CD8-positive, alpha-beta memory T cell (primary cell): ENCODE measurements at regions of chr6 and their contacts with region 1.

Region 1: GRCh38 chr6:152338335-152339125 is 298.6 kb downstream of the SYNE1 start:
- DNase-seq: peak; percentile 27 to 71 (median 38)
- H3K4me3 ChIP-seq: no peak overlapping the region
- H3K4me3 Mint-ChIP-seq: no peak overlapping the region
- H3K27ac ChIP-seq: no peak overlapping the region
- H3K27ac Mint-ChIP-seq: peak overlapping the region in 1 of 8 donors; percentile 82
- H3K4me1 ChIP-seq: no peaks in the 10 kb centered on the region
- H3K4me1 Mint-ChIP-seq: peaks cover 0 to 4% (median 3%) of the 10 kb centered on the region in 3 donors
- H3K27me3 ChIP-seq: no peaks in the 10 kb centered on the region
- H3K27me3 Mint-ChIP-seq: peaks cover 0 to 1% of the 10 kb centered on the region in 2 donors

Region 2: GRCh38 chr6:152301764-152302568 is 36.6 kb before region 1 on chr6:
- CTCF ChIA-PET with region 1: interaction called, 80 read pairs
- POLR2A ChIA-PET with region 1: no interaction called
- DNase-seq: peak; percentile 81 to 91 (median 88)
- H3K4me3 ChIP-seq: peak overlapping the region; percentile 97
- H3K4me3 Mint-ChIP-seq: peak overlapping the region; percentile 95 to 100 (median 100)
- H3K27ac ChIP-seq: peak overlapping the region; percentile 85
- H3K27ac Mint-ChIP-seq: peak overlapping the region; percentile 93 to 100 (median 98)
- H3K4me1 ChIP-seq: peaks cover 31% of the 10 kb centered on the region
- H3K4me1 Mint-ChIP-seq: peaks cover 30 to 49% (median 42%) of the 10 kb centered on the region in 3 donors
- H3K27me3 ChIP-seq: no peaks in the 10 kb centered on the region
- H3K27me3 Mint-ChIP-seq: no peaks in the 10 kb centered on the region

Region 3: DNA sequence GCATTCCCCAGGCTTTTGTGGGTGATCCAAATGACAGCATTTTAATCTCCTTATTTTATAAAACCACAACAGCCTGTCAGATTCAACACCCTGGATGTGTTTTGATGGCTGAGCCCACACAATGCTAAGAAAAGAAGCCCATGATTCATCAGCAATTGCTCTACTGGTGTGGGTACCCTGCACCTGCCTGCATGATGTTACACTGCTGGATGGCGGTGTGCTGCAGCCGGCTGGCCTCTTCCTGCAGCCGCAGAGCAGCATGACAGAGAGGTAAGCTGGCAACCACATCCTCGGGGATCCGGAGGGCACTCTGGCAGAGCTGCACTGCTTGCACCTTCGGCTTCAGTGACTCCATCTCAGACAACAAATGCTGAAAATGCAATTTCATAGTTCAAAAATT is 28.9 kb before region 1 on chr6:
- CTCF ChIA-PET with region 1: interaction called, 10 read pairs
- POLR2A ChIA-PET with region 1: no interaction called
- DNase-seq: peak; percentile 30 to 83 (median 59)
- H3K4me3 ChIP-seq: no peak overlapping the region
- H3K4me3 Mint-ChIP-seq: peak overlapping the region in 2 of 7 donors; percentile 23 to 25
- H3K27ac ChIP-seq: no peak overlapping the region
- H3K27ac Mint-ChIP-seq: peak overlapping the region in 2 of 8 donors; percentile 12 to 46
- H3K4me1 ChIP-seq: peaks cover 11% of the 10 kb centered on the region
- H3K4me1 Mint-ChIP-seq: peaks cover 17 to 20% (median 20%) of the 10 kb centered on the region in 3 donors
- H3K27me3 ChIP-seq: no peaks in the 10 kb centered on the region
- H3K27me3 Mint-ChIP-seq: no peaks in the 10 kb centered on the region

Region 4: DNA sequence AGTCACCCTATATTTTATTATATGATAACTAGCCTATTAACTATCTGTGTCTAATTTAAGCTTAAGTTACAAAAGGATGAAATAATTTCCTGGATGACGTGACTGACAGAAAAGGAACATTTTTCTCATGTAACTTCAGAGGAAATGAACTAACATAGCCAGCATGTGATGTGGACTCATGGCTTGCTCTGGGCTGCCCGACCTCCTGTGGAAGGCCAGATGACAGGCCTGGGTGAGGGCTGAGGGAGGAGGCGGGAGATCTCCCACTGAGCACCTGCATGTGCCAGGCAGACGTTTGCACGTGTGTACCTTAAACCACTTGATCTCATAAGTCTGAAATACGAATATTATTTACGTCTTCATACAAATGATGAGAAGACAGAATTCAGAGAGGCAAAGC is 22.5 kb before region 1 on chr6:
- CTCF ChIA-PET with region 1: interaction called, 18 read pairs
- POLR2A ChIA-PET with region 1: no interaction called
- DNase-seq: no peak
- H3K4me3 ChIP-seq: no peak overlapping the region
- H3K4me3 Mint-ChIP-seq: no peak overlapping the region
- H3K27ac ChIP-seq: no peak overlapping the region
- H3K27ac Mint-ChIP-seq: no peak overlapping the region
- H3K4me1 ChIP-seq: peaks cover 1% of the 10 kb centered on the region
- H3K4me1 Mint-ChIP-seq: peaks cover 0 to 2% (median under 1%) of the 10 kb centered on the region in 3 donors
- H3K27me3 ChIP-seq: no peaks in the 10 kb centered on the region
- H3K27me3 Mint-ChIP-seq: peaks cover 0 to 3% of the 10 kb centered on the region in 2 donors

Region 5: DNA sequence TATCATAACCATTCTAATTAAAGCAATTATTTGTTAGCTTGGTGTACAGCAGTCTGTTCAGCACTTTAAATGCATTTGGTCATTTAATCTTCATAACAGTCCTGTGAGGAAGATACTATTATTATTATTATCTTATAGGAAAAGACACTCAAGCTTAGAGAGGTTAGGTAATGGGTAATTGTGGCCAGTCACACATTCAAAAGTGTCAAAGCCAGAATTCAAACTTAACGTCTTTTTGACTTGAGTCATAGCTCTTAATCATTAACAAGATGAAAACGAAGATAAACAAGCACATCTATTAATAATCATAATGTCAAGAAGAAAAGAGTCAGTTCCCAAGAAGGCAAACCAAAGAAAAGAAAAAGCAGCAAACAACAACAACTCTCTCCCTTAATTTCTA is 47.6 kb after region 1 on chr6:
- CTCF ChIA-PET with region 1: no interaction called
- POLR2A ChIA-PET with region 1: no interaction called
- DNase-seq: no peak
- H3K4me3 ChIP-seq: no peak overlapping the region
- H3K4me3 Mint-ChIP-seq: no peak overlapping the region
- H3K27ac ChIP-seq: no peak overlapping the region
- H3K27ac Mint-ChIP-seq: no peak overlapping the region
- H3K4me1 ChIP-seq: no peaks in the 10 kb centered on the region
- H3K4me1 Mint-ChIP-seq: peaks cover 0 to 4% (median 3%) of the 10 kb centered on the region in 3 donors
- H3K27me3 ChIP-seq: no peaks in the 10 kb centered on the region
- H3K27me3 Mint-ChIP-seq: no peaks in the 10 kb centered on the region